Cardiac septum (tissue), 1 donor: ENCODE measurements at regions of chr7 and their contacts with region 1.

Region 1: DNA sequence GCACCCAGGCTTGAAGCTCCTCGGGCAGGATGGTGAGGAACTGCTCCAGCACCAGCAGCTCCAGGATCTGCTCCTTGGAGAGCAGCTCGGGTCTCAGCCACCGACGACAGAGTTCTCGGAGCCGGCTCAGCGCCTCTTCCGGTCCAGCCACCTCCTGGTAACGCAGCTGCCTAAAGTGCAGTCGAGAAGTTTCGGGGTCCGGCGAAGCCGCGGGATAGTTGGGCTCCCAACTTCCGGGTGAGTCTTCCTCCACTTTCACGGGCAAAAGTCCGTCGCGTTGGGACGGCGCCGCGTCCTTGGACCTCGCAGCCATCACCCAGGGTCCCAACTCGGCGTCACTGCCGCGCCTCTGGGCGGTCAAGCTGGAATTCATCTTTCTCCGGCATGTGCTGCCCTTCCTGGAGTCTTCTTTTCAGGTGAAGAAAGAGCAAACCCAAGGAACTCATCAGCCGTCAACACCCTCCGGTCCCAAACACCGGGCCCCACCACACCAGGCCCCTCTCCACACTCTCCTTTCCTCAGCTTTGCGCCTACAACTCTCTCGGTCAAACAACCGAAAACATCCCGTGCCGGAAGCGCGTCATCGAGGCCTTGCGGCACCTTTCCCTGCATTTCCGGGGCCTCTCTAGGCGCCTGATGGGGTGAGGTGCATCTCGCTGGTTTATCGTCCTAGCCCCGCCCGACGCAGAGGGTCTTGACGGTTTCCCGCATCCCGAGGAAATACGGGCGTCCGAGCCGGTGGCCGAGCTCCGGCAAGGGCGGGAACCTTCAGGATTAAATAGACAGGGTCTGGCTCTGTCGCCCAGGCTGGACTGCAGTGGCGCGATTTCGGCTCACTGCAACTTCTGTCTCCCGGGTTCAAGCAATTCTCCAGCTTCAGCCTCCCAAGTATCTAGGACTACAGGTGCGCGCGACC is at the start of gene ZNF394:
- DNase-seq: peak; percentile 97
- total RNA-seq, gene ZNF394: 14.9 TPM

Region 2: GRCh38 chr7:98945852-98946251 is 554.1 kb before region 1 on chr7:
- intact Hi-C with region 1: no loop called
- DNase-seq: no peak

Region 3: DNA sequence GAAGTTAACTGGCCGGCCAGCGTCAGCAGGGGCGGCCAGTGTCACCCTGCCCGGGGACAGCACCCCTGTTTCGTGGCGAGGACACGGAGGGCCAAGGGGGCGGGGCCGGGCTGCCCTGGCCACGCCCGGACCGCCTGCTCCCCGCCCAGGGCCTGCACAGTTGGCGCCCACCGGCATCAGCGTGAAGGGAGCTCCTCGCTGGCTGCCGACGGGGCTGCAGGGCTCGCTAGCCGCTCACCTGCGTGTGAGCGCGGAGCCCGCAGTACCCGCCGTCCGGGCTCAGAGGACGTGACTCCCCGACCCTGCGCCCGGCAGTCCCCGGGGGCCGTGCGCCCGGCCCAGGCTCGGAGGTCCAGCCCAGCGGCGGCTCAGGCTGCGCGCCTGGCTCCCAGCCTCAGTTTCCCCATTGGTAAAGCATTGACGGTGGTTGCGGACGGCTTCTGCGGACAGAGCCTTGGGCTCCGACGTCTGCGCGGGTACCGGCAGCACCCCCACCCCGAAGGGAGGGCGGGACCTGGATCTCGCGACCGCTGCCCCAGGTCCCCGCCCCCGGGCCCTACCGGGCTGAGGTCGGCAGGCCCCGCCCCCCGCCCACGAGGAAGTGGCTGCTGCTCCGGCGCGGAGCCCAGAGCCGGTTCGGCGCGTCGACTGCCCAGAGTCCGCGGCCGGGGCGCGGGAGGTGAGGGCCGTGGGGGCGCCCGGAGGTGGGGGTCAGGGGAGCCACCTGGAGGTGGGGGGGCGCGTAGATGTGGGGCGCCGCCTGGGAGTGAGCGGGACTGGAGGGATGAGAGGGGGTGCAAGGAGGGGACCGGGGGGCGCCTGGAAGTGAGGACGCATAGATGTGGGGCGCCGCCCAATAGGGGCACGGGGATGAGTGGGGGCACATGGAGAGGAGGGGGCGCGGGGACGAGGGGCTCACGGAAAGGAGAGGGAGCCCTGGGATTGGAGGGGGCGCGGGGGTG is 125.6 kb before region 1 on chr7 and contains the start of gene ARPC1B:
- intact Hi-C with region 1: no loop called
- DNase-seq: peak; percentile 95
- total RNA-seq, gene ARPC1B: 40.4 TPM

Region 4: GRCh38 chr7:99472561-99473243 is 27.3 kb before region 1 on chr7 and contains the start of gene ZNF789:
- intact Hi-C with region 1: loop called (anchors 1 kb)
- DNase-seq: peak; percentile 99
- total RNA-seq, gene ZNF789: 3.8 TPM

Region 5: GRCh38 chr7:99551767-99552463 is 51.9 kb after region 1 on chr7 and contains the start of gene FAM200A:
- intact Hi-C with region 1: loop called (anchors 2 kb)
- DNase-seq: peak; percentile 94
- total RNA-seq, gene FAM200A: 4.9 TPM